ENCODE measurements at regions of chr12 and their contacts with region 1.

Region 1: GRCh38 chr12:2004113-2004929 is at the start of gene DCP1B:
- DNase-seq: peak; percentile 83 to 98 (median 92)
- ATAC-seq: peak; percentile 94
- H3K4me3 ChIP-seq: peak within 1 kb of the TSS; percentile 65 to 99
- H3K4me3 Mint-ChIP-seq: peak within 1 kb of the TSS; percentile 98
- H3K27ac ChIP-seq: peak within 1 kb of the TSS; percentile 71 to 92
- H3K27ac Mint-ChIP-seq: peak within 1 kb of the TSS; percentile 99
- H3K4me1 ChIP-seq: peaks cover 19% of the 10 kb centered on the region
- H3K4me1 Mint-ChIP-seq: peaks cover 37% of the 10 kb centered on the region
- H3K27me3 ChIP-seq: peaks cover 0 to 2% of the 10 kb centered on the region in 2 experiments
- H3K27me3 Mint-ChIP-seq: no peaks in the 10 kb centered on the region
- CTCF ChIP-seq: no peak
- total RNA-seq, gene DCP1B: 3.0 TPM

Region 2: GRCh38 chr12:389139-390096 is 1614.9 kb before region 1 on chr12 and contains the start of gene KDM5A:
- CTCF ChIA-PET with region 1: no interaction called
- POLR2A ChIA-PET with region 1: no interaction called
- intact Hi-C with region 1: loop called in 1 of 2 experiments (anchors 5 kb)
- DNase-seq: peak; percentile 78 to 96 (median 90)
- ATAC-seq: peak; percentile 90
- H3K4me3 ChIP-seq: peak within 1 kb of the TSS; percentile 91 to 96
- H3K4me3 Mint-ChIP-seq: peak within 1 kb of the TSS; percentile 93
- H3K27ac ChIP-seq: peak within 1 kb of the TSS; percentile 90 to 94
- H3K27ac Mint-ChIP-seq: peak within 1 kb of the TSS; percentile 98
- H3K4me1 ChIP-seq: peaks cover 39% of the 10 kb centered on the region
- H3K4me1 Mint-ChIP-seq: peaks cover 38% of the 10 kb centered on the region
- H3K27me3 ChIP-seq: no peaks in the 10 kb centered on the region
- H3K27me3 Mint-ChIP-seq: no peaks in the 10 kb centered on the region
- CTCF ChIP-seq: no peak
- total RNA-seq, gene KDM5A: 144 to 145 TPM

Region 3: GRCh38 chr12:1690578-1691122 is 313.7 kb before region 1 on chr12 and contains the start of gene ADIPOR2:
- CTCF ChIA-PET with region 1: no interaction called
- POLR2A ChIA-PET with region 1: no interaction called
- intact Hi-C with region 1: loop called in 1 of 2 experiments (anchors 5 kb)
- DNase-seq: peak; percentile 88 to 98 (median 94)
- ATAC-seq: peak; percentile 97
- H3K4me3 ChIP-seq: peak within 1 kb of the TSS; percentile 84 to 91
- H3K4me3 Mint-ChIP-seq: peak within 1 kb of the TSS; percentile 92
- H3K27ac ChIP-seq: peak within 1 kb of the TSS; percentile 73 to 94
- H3K27ac Mint-ChIP-seq: peak within 1 kb of the TSS; percentile 99
- H3K4me1 ChIP-seq: peaks cover 20% of the 10 kb centered on the region
- H3K4me1 Mint-ChIP-seq: peaks cover 46% of the 10 kb centered on the region
- H3K27me3 ChIP-seq: no peaks in the 10 kb centered on the region
- H3K27me3 Mint-ChIP-seq: no peaks in the 10 kb centered on the region
- CTCF ChIP-seq: no peak
- total RNA-seq, gene ADIPOR2: 19.4 to 22.5 TPM

Region 4: DNA sequence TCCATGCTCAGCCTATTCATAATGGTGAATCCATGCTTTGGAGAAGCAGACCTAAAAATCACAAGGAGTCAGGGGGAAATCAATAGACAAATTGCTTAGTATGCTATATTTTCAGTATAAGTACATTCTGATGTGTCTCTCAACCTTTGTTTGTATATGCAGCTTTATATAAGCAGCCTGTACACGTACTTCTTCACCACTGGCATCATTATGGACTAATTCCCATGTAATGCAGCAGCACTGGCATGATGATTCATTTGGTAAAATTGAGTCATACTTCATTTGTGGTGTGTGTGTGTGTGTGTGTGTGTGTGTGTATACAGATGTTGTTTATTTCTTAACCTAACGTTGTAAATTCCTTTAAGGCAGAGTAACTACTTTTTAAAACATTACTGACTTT is 11.0 kb before region 1 on chr12:
- CTCF ChIA-PET with region 1: no interaction called
- POLR2A ChIA-PET with region 1: interaction called, 11 read pairs
- intact Hi-C with region 1: no loop called
- DNase-seq: peak in 2 of 9 experiments; percentile 39 to 58
- ATAC-seq: peak; percentile 31
- H3K4me3 ChIP-seq: no peak overlapping the region
- H3K4me3 Mint-ChIP-seq: no peak overlapping the region
- H3K27ac ChIP-seq: peak overlapping the region in 1 of 2 experiments; percentile 79
- H3K27ac Mint-ChIP-seq: peak overlapping the region; percentile 15
- H3K4me1 ChIP-seq: peaks cover 15% of the 10 kb centered on the region
- H3K4me1 Mint-ChIP-seq: peaks cover 43% of the 10 kb centered on the region
- H3K27me3 ChIP-seq: no peaks in the 10 kb centered on the region
- H3K27me3 Mint-ChIP-seq: no peaks in the 10 kb centered on the region
- CTCF ChIP-seq: no peak

Region 5: DNA sequence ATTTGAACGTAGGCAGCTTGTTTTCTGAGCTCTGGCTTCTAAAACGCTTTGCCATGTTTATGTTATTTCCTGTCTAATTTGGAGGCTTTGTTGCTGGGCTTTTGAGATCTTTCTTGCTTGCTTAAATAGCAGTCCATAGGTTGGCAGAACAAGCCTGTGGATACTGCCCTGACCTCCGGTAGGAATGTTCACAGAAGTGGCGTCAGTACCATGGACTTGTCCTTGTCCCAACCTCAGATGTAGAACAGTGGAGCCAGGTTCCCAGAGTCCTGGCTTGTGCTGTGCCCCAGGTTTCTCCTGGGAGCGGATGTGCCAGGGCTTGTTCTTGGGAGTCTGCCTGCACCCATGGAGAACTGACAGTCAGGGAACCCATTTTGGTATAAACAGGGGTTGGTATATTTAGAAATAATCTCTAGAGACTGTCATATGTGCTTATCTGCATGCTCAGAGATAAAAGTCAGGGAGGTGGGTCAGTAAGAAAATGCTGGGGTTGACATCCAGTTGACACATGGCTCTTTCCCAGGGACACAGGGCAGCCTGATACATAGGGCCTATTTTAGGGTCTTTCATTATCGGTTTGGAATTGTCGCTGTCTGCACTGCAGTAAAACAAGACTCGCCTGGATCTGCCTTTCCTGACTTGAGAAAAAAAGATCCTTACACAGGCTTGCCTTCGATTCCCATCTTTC is 71.3 kb after region 1 on chr12:
- CTCF ChIA-PET with region 1: no interaction called
- POLR2A ChIA-PET with region 1: no interaction called
- intact Hi-C with region 1: no loop called
- DNase-seq: no peak
- ATAC-seq: no peak
- H3K4me3 ChIP-seq: no peak overlapping the region
- H3K4me3 Mint-ChIP-seq: no peak overlapping the region
- H3K27ac ChIP-seq: no peak overlapping the region
- H3K27ac Mint-ChIP-seq: no peak overlapping the region
- H3K4me1 ChIP-seq: no peaks in the 10 kb centered on the region
- H3K4me1 Mint-ChIP-seq: no peaks in the 10 kb centered on the region
- H3K27me3 ChIP-seq: no peaks in the 10 kb centered on the region
- H3K27me3 Mint-ChIP-seq: peaks cover 17% of the 10 kb centered on the region
- CTCF ChIP-seq: no peak

Region 6: GRCh38 chr12:2877047-2877952 is 873.0 kb after region 1 on chr12 and contains the starts of genes FOXM1 and RHNO1:
- CTCF ChIA-PET with region 1: no interaction called
- POLR2A ChIA-PET with region 1: no interaction called
- intact Hi-C with region 1: loop called in 1 of 2 experiments (anchors 10 kb)
- DNase-seq: peak; percentile 73 to 91 (median 85)
- ATAC-seq: peak; percentile 78
- H3K4me3 ChIP-seq: peak within 1 kb of the TSS; percentile 83 to 95
- H3K4me3 Mint-ChIP-seq: peak within 1 kb of the TSS; percentile 99
- H3K27ac ChIP-seq: peak within 1 kb of the TSS; percentile 90 to 91
- H3K27ac Mint-ChIP-seq: peak within 1 kb of the TSS; percentile 100
- H3K4me1 ChIP-seq: peaks cover 22% of the 10 kb centered on the region
- H3K4me1 Mint-ChIP-seq: peaks cover 37% of the 10 kb centered on the region
- H3K27me3 ChIP-seq: no peaks in the 10 kb centered on the region
- H3K27me3 Mint-ChIP-seq: no peaks in the 10 kb centered on the region
- CTCF ChIP-seq: no peak
- total RNA-seq, gene FOXM1: 0.83 to 0.95 TPM
- total RNA-seq, gene RHNO1: 22.4 to 24.4 TPM

Region 7: DNA sequence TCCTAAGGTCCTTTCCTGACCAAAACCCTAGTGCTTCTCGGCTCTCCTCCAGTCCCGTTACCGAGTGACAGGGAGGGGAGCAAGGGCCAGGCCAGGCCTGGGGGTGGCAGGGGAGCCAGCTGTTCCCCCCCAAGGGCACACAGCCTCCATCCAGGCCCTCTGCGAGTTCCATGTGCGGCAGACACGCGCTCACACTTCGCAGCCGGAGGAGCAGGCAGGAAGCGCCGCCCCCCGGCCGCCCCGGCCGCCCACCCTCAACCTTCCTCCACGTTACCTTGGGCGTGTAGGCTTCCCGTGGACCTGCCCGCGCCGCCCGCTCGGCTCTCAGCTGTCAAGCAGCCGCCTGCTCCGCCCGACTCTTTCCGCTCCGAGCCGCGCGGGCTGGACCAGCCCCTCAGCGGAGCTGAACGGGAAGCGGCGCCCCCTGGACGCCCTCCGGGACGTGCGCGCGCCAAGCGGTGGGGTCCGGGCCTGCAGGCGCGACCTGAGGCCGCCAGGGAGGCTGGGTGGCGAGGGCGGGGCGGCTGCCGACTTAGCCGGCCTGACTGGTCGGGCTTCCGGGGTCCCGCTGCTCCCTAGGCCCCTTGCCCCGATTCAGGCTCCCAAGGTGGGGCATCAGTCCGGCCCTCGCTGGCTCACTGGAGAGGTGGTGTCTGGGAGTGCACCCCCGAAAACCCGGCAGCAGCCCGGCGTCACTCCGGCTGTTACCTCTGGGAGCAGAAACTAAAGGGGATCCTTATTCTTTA is 1748.6 kb after region 1 on chr12 and contains the start of gene CRACR2A:
- CTCF ChIA-PET with region 1: no interaction called
- POLR2A ChIA-PET with region 1: no interaction called
- intact Hi-C with region 1: loop called in 1 of 2 experiments (anchors 10 kb)
- DNase-seq: peak; percentile 71 to 94 (median 85)
- ATAC-seq: peak; percentile 81
- H3K4me3 ChIP-seq: peak within 1 kb of the TSS; percentile 63 to 81
- H3K4me3 Mint-ChIP-seq: peak within 1 kb of the TSS; percentile 84
- H3K27ac ChIP-seq: peak within 1 kb of the TSS; percentile 94 to 95
- H3K27ac Mint-ChIP-seq: peak within 1 kb of the TSS; percentile 95
- H3K4me1 ChIP-seq: peaks cover 45% of the 10 kb centered on the region
- H3K4me1 Mint-ChIP-seq: peaks cover 62% of the 10 kb centered on the region
- H3K27me3 ChIP-seq: no peaks in the 10 kb centered on the region
- H3K27me3 Mint-ChIP-seq: no peaks in the 10 kb centered on the region
- CTCF ChIP-seq: peak; percentile 87
- total RNA-seq, gene CRACR2A: 17.9 TPM

Measured in CD8-positive, alpha-beta T cell (primary cell).